MCF 10A (cell line): ENCODE measurements at regions of chr13 and their contacts with region 1.

Region 1: DNA sequence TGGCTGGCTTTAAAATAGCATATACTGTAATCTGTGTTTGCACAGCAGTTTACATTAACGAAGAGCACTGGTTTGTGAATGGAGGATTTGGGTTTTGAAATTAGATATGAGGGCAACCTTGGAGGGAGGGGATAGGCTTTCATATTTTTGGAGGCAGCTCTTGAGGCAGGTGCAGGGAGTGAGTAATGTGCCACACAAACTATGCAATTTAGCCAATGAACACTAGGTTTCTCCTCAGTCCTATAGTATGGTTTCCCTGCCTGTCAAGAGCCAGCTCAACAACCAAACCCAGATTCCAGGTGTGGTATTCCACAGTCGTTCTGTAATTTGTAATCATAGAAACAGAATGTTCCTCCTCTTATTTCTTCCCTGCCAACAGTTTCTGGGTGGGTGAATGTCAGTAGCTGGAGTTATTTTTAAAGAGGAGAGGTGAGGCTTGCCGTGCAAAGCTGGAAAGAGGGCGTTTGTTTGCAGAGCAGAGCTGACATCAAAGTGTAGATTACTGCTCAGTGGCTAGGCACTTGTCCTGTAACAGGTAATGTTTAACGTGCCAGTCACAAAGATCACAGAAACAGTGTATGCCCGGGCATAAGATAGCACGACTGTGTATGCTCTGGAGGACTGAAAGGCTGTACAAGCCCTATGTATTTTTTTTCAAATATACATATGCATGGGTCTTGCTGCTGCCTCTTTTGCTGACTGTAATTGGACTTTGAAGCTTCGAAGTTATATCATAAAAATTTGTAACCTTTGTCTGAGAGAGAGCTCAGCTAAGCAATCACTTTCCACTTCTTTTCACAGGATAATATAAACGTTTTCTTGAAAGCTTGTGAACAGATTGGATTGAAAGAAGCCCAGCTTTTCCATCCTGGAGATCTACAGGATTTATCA is 124.2 kb downstream of the LMO7 start:
- DNase-seq: peak; percentile 81
- H3K4me3 Mint-ChIP-seq: peak overlapping the region; percentile 80
- H3K27ac Mint-ChIP-seq: peak overlapping the region; percentile 99
- H3K4me1 Mint-ChIP-seq: peaks cover 44% of the 10 kb centered on the region
- H3K27me3 Mint-ChIP-seq: no peaks in the 10 kb centered on the region
- CTCF ChIP-seq: peak; percentile 28

Region 2: DNA sequence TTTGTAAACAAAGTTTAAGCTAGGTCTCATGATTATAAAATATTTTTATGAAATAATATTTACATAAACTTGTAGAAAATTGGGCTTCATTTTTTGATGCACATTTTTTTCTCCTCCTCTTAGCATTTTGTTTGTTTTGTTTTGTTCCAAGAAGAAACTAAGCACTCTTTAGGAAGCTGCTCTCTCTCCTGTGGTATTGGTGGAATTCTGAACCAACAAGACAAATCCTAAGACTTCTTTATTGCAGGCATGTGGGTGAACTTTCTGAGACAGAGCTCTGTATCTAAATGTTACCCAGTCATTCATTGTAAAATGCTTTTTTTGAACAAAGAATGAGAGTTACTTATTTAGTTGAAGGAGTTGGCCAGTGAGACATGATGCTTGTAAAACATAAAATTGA is 85.0 kb before region 1 on chr13:
- CTCF ChIA-PET with region 1: interaction called, 10 read pairs
- POLR2A ChIA-PET with region 1: interaction called, 5 read pairs
- intact Hi-C with region 1: no loop called
- DNase-seq: peak; percentile 20
- H3K4me3 Mint-ChIP-seq: peak overlapping the region; percentile 79
- H3K27ac Mint-ChIP-seq: peak overlapping the region; percentile 93
- H3K4me1 Mint-ChIP-seq: peaks cover 8% of the 10 kb centered on the region
- H3K27me3 Mint-ChIP-seq: no peaks in the 10 kb centered on the region
- CTCF ChIP-seq: no peak

Region 3: DNA sequence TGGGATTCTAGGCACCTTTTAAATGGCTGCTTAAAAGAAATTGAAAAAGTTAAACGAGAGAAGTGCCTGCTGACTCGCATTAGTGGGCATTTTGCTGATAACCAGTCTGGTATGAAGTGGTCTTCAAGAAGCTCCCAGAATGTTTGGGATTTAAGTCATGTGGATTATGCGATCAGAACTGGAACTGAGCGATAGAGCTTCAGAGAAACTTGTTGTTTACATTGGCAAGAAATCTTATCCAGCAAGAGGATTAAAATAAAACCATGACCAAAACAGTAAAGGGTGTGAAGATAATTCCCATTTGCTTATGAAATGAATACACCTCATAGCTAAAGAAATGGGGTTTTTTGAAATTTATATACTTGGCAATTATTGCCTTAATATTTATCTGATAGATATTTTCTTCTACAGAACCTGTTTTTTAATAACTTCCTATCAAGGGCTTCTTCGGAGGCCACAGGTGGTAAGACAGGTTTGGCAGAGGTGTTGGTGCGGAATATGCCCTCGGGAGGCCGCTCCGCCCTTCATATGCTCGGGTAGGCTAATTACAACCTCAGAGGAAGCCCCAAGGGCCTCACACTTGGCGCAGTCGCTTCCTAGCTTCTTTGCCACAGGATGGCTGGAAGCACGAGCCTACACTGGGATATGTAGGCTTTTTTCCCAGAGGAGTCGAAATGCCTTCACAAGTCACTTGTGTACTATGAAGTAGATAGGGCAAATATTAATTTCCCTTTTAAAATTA is 55.6 kb before region 1 on chr13:
- CTCF ChIA-PET with region 1: interaction called, 19 read pairs
- POLR2A ChIA-PET with region 1: interaction called, 104 read pairs
- intact Hi-C with region 1: no loop called
- DNase-seq: peak; percentile 69
- H3K4me3 Mint-ChIP-seq: peak overlapping the region; percentile 34
- H3K27ac Mint-ChIP-seq: peak overlapping the region; percentile 98
- H3K4me1 Mint-ChIP-seq: peaks cover 17% of the 10 kb centered on the region
- H3K27me3 Mint-ChIP-seq: no peaks in the 10 kb centered on the region
- CTCF ChIP-seq: peak; percentile 23

Region 4: GRCh38 chr13:75724752-75725504 is 35.4 kb before region 1 on chr13:
- CTCF ChIA-PET with region 1: no interaction called
- POLR2A ChIA-PET with region 1: interaction called, 48 read pairs
- intact Hi-C with region 1: no loop called
- DNase-seq: peak; percentile 26
- H3K4me3 Mint-ChIP-seq: no peak overlapping the region
- H3K27ac Mint-ChIP-seq: peak overlapping the region; percentile 75
- H3K4me1 Mint-ChIP-seq: peaks cover 29% of the 10 kb centered on the region
- H3K27me3 Mint-ChIP-seq: no peaks in the 10 kb centered on the region
- CTCF ChIP-seq: no peak

Region 5: DNA sequence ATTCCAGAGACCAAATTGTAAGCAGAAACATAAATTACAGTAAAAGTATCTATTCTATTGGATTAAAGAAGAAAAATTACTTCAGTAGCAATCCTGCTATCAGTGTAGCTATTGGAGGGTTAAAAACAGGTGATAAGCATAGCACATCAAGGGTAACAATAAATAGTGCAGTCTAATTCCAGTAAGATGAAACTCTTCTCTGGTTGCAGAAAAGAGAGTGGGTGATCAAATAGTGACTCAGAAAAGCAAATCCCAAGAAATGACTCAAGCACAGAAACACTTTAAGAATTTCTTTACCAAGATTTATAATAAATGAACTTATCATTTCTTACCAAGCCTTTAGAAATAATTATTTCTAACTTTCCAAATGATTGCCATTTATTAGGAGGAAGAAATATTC is 11.4 kb after region 1 on chr13:
- CTCF ChIA-PET with region 1: interaction called, 11 read pairs
- POLR2A ChIA-PET with region 1: interaction called, 22 read pairs
- intact Hi-C with region 1: no loop called
- DNase-seq: peak; percentile 65
- H3K4me3 Mint-ChIP-seq: no peak overlapping the region
- H3K27ac Mint-ChIP-seq: peak overlapping the region; percentile 71
- H3K4me1 Mint-ChIP-seq: peaks cover 20% of the 10 kb centered on the region
- H3K27me3 Mint-ChIP-seq: no peaks in the 10 kb centered on the region
- CTCF ChIP-seq: no peak

Region 6: DNA sequence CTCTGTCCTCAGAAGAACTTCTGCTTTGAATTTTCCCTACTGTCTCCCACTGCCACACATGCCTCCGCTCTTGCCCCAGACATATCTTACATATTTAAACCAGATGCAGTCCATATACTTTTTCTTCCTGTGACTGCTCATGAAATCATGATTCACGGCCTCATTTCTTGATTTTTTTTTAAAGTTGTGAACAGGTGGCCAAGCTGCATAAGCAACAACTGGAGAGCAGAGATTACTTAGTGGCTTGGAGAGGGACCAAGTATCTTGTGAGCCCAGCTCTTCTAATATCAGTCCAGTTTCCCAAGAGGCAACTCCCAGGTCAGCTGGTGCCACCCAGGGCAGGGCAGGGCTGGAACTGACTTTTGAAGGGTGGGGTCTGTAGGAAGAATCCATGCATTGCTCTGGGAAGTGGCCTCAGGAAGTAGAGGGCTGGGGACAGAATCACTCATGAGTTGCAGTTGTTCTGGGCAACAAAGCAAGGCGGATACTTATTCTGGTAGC is 28.2 kb after region 1 on chr13:
- CTCF ChIA-PET with region 1: interaction called, 4 read pairs
- POLR2A ChIA-PET with region 1: interaction called, 27 read pairs
- intact Hi-C with region 1: no loop called
- DNase-seq: peak; percentile 72
- H3K4me3 Mint-ChIP-seq: no peak overlapping the region
- H3K27ac Mint-ChIP-seq: no peak overlapping the region
- H3K4me1 Mint-ChIP-seq: no peaks in the 10 kb centered on the region
- H3K27me3 Mint-ChIP-seq: no peaks in the 10 kb centered on the region
- CTCF ChIP-seq: no peak

Region 7: GRCh38 chr13:75870397-75870903 is 110.1 kb after region 1 on chr13:
- CTCF ChIA-PET with region 1: interaction called, 7 read pairs
- POLR2A ChIA-PET with region 1: interaction called, 3 read pairs
- intact Hi-C with region 1: loop called (anchors 5 kb)
- DNase-seq: peak; percentile 30
- H3K4me3 Mint-ChIP-seq: peak overlapping the region; percentile 77
- H3K27ac Mint-ChIP-seq: no peak overlapping the region
- H3K4me1 Mint-ChIP-seq: no peaks in the 10 kb centered on the region
- H3K27me3 Mint-ChIP-seq: no peaks in the 10 kb centered on the region
- CTCF ChIP-seq: peak; percentile 62